Kidney (tissue), 22 donors: ENCODE measurements at regions of chr9 and their contacts with region 1.

Region 1: GRCh38 chr9:123081824-123082223 is 48.4 kb downstream of the GPR21 start:
- DNase-seq: peak in 3 of 5 donors; percentile 48 to 78 (median 74)
- H3K4me3 ChIP-seq: no peak overlapping the region
- H3K27ac ChIP-seq: no peak overlapping the region
- H3K4me1 ChIP-seq: peaks cover 0 to 3% (median 0%) of the 10 kb centered on the region in 3 donors
- H3K27me3 ChIP-seq: no peaks in the 10 kb centered on the region
- CTCF ChIP-seq: peak; percentile 64

Region 2: DNA sequence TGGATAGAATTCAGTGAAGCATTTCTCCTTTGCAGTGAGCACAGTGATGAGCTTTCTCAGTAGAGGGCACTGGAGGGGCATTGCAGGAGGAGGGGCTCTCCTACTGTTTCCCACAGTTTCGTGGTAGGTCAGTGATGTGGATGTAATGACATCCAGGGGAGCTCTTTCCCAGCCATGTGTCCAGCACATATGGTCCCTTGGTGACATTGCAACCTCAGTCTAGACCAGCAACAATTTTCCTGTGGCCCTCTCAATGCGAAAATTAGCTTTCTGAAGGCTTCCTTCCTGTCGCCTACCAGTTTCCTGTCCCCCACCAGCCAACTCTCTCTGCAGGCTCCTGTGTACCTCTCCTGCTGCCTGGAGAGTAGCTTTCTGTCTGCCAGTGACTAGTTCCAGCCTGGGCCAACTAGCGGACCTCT is 246.5 kb before region 1 on chr9:
- intact Hi-C with region 1: no loop called
- DNase-seq: peak in 2 of 5 donors; percentile 9 to 37
- H3K4me3 ChIP-seq: no peak overlapping the region
- H3K27ac ChIP-seq: no peak overlapping the region
- H3K4me1 ChIP-seq: no peaks in the 10 kb centered on the region
- H3K27me3 ChIP-seq: no peaks in the 10 kb centered on the region
- CTCF ChIP-seq: no peak

Region 3: DNA sequence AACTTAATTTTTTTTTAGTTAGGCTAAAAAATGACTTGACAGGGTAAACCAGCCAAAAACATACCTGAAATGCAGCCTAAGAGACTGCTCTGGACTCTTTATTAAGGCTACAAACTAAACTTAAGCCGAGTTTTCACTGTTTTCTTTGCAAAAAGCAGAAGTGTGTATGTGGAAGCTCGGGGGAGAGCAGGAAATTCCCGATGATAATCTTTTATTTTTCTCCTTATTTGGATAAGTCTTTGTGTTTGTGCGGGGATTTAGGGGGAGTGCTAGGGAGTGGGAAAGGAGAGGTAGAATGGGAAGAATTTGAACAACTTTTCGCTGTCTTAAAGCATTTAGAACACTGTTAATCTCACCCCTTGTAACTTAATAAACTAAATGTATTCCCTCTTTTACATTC is 79.1 kb before region 1 on chr9:
- intact Hi-C with region 1: no loop called
- DNase-seq: peak in 2 of 5 donors; percentile 31 to 66
- H3K4me3 ChIP-seq: peak overlapping the region in 1 of 3 donors; percentile 12
- H3K27ac ChIP-seq: peak overlapping the region in 1 of 2 donors; percentile 1
- H3K4me1 ChIP-seq: no peaks in the 10 kb centered on the region
- H3K27me3 ChIP-seq: no peaks in the 10 kb centered on the region
- CTCF ChIP-seq: no peak

Region 4: DNA sequence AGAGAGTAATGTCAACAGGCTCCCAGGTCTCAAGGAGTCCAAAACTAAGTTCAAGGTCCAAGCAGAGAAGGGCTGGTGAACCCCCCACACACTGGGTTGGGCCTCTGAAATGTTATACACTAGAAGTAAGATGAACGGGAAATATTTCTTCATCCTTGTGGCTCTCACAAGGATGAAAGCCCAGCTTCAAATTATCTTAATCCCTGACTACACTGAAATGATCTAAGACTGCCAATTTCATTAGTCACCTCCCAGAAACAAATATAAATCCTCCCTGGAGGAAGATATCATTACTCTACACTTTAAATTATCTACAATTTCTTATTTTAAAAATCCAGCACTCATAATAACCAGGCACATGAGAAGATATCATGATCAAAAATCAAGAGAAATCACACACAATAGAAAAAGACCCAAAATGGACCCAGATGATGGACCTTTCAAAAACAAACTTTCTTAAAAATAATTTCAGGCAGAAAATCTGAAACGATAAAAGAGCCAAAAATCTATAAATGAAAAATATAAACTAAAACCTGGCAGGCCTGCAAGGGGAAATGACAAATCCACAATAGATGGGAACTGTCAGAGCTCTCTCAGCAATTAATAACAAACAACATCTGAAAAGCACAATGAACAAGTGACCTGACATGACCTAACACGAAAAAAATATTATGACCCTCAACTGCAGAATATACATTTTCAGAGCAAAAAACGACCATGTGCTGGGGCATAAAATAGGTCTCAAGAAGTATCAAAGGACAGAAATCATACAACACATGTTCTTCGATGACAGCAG is 69.1 kb after region 1 on chr9:
- intact Hi-C with region 1: no loop called
- DNase-seq: no peak
- H3K4me3 ChIP-seq: no peak overlapping the region
- H3K27ac ChIP-seq: no peak overlapping the region
- H3K4me1 ChIP-seq: no peaks in the 10 kb centered on the region
- H3K27me3 ChIP-seq: no peaks in the 10 kb centered on the region
- CTCF ChIP-seq: no peak

Region 5: GRCh38 chr9:123349691-123350480 is 268.1 kb after region 1 on chr9:
- intact Hi-C with region 1: loop called (anchors 10 kb)
- DNase-seq: peak in 3 of 5 donors; percentile 70 to 82 (median 78)
- H3K4me3 ChIP-seq: no peak overlapping the region
- H3K27ac ChIP-seq: no peak overlapping the region
- H3K4me1 ChIP-seq: peaks cover 0 to 6% (median 0%) of the 10 kb centered on the region in 3 donors
- H3K27me3 ChIP-seq: no peaks in the 10 kb centered on the region
- CTCF ChIP-seq: peak; percentile 89

Region 6: DNA sequence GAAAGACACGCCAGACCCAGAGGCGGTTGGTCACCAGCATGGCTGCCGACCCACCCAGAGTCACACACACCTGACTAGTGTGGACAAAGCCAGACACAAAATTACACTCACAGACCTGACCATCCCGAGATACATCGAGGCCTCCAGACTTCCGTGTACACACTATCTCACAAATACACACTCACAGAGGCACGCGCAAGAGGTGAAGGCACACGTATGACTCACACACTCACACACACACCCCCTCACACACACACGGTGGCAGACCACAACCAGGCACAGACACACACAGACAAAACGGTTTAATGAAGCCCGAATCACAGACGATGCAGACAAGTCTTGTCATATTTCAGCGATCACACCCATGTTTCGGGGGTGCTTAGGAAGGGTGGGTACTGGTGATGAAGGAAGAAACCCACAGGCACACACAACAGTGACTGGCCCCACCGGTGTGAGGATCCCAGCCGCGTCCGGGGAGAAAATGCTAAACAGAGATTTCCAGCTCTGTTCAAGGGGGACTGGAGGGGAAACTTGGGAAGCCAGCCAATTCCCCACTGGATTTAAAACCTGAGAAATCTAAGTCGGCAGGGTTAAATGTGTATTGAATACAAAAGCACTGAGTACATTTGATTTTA is 325.5 kb after region 1 on chr9:
- intact Hi-C with region 1: no loop called
- DNase-seq: peak in 2 of 5 donors; percentile 22 to 66
- H3K4me3 ChIP-seq: no peak overlapping the region
- H3K27ac ChIP-seq: no peak overlapping the region
- H3K4me1 ChIP-seq: no peaks in the 10 kb centered on the region
- H3K27me3 ChIP-seq: no peaks in the 10 kb centered on the region
- CTCF ChIP-seq: no peak